Prostate gland (tissue), 2 donors: ENCODE measurements at regions of chr1 and their contacts with region 1.

Region 1: DNA sequence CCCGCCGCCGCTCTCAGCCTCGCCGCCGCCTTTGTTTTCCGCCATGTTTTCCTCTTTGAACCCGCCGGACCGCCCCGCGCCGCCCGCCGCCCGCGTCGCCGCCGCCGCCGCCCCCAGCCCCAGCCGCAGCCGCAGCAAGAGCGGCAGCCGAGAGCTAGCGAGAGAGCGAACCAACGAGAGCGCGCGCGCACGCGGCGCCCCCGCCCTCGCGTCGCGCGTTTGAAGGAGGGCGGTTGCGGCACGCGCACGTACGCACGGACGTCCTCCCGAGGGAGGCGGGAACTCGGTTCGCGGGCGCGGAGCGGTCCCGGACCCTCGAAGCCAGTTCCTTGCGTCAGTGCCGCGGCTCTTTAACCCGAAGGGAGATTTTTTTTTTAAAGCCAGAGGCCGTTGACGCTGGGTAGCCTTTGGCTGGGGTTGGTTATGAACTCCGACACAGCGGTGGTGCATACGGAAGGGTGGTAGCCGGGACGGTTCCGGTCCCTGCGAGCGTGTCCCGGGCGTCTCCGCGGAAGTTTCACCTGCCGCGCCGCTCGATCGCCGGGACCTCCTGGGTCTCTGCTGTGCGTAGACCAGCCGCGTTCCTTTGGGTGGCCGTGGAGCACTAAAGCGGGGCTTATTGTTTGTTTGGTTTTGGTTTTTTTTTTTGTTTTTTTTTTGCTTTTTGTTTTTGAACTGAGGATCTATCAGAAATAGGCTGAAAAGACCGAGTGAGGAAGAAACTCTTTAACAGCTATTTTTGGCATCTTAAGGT is at the start of gene TRIM33:
- DNase-seq: peak; percentile 90
- H3K4me3 ChIP-seq: peak within 1 kb of the TSS; percentile 81 to 89
- H3K27ac ChIP-seq: peak within 1 kb of the TSS; percentile 93 to 98
- H3K4me1 ChIP-seq: no peaks in the 10 kb centered on the region
- H3K27me3 ChIP-seq: no peaks in the 10 kb centered on the region
- CTCF ChIP-seq: peak in 1 of 4 experiments; percentile 14
- POLR2A ChIP-seq: peak; percentile 80
- total RNA-seq, gene TRIM33: 36.7 to 54.9 TPM

Region 2: GRCh38 chr1:114346480-114347029 is 164.7 kb before region 1 on chr1:
- intact Hi-C with region 1: loop called (anchors 5 kb)
- DNase-seq: peak; percentile 93
- H3K4me3 ChIP-seq: peak overlapping the region; percentile 34 to 42
- H3K27ac ChIP-seq: peak overlapping the region; percentile 79 to 86
- H3K4me1 ChIP-seq: peaks cover 7% of the 10 kb centered on the region
- H3K27me3 ChIP-seq: no peaks in the 10 kb centered on the region
- CTCF ChIP-seq: peak; percentile 99 to 100 (median 100)
- POLR2A ChIP-seq: no peak

Region 3: GRCh38 chr1:114428083-114428749 is 83.0 kb before region 1 on chr1:
- intact Hi-C with region 1: loop called (anchors 10 kb)
- DNase-seq: no peak
- H3K4me3 ChIP-seq: no peak overlapping the region
- H3K27ac ChIP-seq: no peak overlapping the region
- H3K4me1 ChIP-seq: no peaks in the 10 kb centered on the region
- H3K27me3 ChIP-seq: no peaks in the 10 kb centered on the region
- CTCF ChIP-seq: peak in 2 of 4 experiments; percentile 33 to 43
- POLR2A ChIP-seq: no peak

Region 4: DNA sequence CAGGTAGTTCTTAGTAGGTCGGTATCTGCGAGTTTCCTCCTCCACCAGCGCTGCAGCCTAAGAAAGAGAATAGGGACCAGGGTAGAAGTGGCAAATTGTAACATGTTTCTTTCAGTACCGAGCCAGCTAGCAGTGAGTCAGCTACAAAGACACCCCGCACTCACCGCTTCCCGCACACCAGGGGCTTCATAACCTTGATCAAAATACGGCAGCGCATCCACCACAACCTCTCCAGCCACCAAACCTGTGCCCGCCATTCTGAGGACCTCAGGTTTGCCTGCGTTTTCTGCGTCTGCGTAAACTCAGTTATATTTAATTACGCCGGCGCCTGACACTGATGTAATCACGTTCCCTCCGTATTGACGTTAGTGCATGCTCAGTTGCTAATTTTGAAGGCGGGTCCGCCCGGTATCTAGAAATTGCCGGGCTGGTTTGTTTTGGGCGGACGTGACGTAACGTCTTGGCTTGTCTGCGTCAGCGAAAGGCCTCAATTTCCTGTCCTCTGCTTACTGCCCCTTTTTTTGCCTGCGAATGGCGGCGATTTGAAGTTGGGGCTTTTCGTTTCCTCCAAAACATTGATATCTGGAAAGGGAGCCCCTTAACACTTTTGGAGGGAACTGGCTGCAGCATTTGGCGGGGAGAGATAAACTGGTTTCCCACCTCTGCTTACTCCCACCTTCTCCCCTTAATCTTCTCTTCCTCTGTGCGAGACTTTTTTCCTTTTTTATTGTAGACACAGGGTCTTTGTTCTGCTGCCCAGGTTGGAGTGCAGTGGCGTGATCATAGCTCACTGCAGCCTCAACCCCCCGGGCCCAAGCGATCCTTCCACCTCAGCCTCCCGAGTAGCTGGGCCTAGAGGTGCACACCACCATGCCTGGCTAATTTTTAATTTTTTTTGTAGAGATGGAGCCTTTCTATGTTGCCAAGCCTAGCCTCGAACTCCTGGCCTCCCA is 70.4 kb after region 1 on chr1 and contains the start of gene BCAS2:
- intact Hi-C with region 1: loop called (anchors 5 kb)
- DNase-seq: peak; percentile 98
- H3K4me3 ChIP-seq: peak within 1 kb of the TSS; percentile 53 to 62
- H3K27ac ChIP-seq: peak within 1 kb of the TSS; percentile 88 to 90
- H3K4me1 ChIP-seq: peaks cover 2% of the 10 kb centered on the region
- H3K27me3 ChIP-seq: no peaks in the 10 kb centered on the region
- CTCF ChIP-seq: peak in 2 of 4 experiments; percentile 10 to 23
- POLR2A ChIP-seq: peak; percentile 92
- total RNA-seq, gene BCAS2: 35.9 to 38.5 TPM

Region 5: GRCh38 chr1:114620419-114620818 is 109.2 kb after region 1 on chr1:
- intact Hi-C with region 1: no loop called
- DNase-seq: no peak
- H3K4me3 ChIP-seq: no peak overlapping the region
- H3K27ac ChIP-seq: no peak overlapping the region
- H3K4me1 ChIP-seq: no peaks in the 10 kb centered on the region
- H3K27me3 ChIP-seq: no peaks in the 10 kb centered on the region
- CTCF ChIP-seq: no peak
- POLR2A ChIP-seq: no peak

Region 6: GRCh38 chr1:114757455-114758250 is 246.4 kb after region 1 on chr1 and contains the start of gene CSDE1:
- intact Hi-C with region 1: loop called (anchors 10 kb)
- DNase-seq: peak; percentile 97
- H3K4me3 ChIP-seq: peak within 1 kb of the TSS; percentile 85 to 98
- H3K27ac ChIP-seq: peak within 1 kb of the TSS; percentile 98 to 100
- H3K4me1 ChIP-seq: peaks cover 6% of the 10 kb centered on the region
- H3K27me3 ChIP-seq: no peaks in the 10 kb centered on the region
- CTCF ChIP-seq: peak in 2 of 4 experiments; percentile 44 to 46
- POLR2A ChIP-seq: peak; percentile 91
- total RNA-seq, gene CSDE1: 458 to 889 TPM

Region 7: DNA sequence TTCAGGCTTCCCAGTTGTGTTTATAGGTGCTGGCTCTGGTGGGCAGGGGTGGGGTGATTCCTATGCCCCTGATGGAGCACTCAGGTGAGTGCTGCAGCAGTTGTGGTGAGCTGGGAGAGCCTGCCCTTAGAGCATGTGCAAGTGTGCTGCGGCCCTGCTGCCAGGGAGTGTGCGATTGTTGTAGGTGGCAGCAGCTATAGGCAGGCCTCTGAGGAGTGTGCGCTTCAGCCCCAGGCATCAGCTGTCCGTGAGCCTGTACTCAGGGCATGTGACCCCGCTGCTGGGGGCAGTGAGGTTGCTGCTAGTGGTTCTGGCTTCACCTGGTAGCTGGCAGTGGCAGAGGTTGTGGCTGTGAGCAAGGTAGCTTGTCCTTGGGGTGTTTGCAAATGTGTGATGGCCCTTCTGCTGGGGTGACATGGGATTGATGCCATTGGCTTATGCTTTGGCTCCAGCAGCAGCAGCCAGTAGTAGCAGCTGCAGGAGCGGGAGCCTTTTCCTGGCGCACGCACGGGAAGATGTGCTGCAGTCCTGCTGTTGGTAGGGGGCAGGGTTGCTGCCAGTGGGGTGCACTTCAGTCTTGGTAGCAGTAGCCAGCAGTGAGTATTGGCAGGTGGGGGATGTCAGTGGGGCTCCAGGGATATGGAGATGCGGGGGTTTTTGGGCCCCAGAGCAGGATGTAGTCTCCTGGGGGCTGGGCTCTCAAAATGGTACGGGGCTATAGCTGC is 381.1 kb after region 1 on chr1:
- intact Hi-C with region 1: no loop called
- DNase-seq: no peak
- H3K4me3 ChIP-seq: no peak overlapping the region
- H3K27ac ChIP-seq: no peak overlapping the region
- H3K4me1 ChIP-seq: no peaks in the 10 kb centered on the region
- H3K27me3 ChIP-seq: no peaks in the 10 kb centered on the region
- CTCF ChIP-seq: no peak
- POLR2A ChIP-seq: no peak